ENCODE measurements at regions of chr14 and their contacts with region 1.

Region 1: GRCh38 chr14:105020815-105021655 is at the start of gene CDCA4:
- DNase-seq: peak; percentile 96 to 97
- ATAC-seq: peak; percentile 81 to 84
- H3K4me3 ChIP-seq: peak within 1 kb of the TSS; percentile 97
- H3K27ac ChIP-seq: peak within 1 kb of the TSS; percentile 97 to 98
- H3K4me1 ChIP-seq: peaks cover 75% of the 10 kb centered on the region
- CTCF ChIP-seq: no peak
- EP300 ChIP-seq: no peak
- POLR2A ChIP-seq: peak; percentile 71
- RAD21 ChIP-seq: no peak
- polyA plus RNA-seq, gene CDCA4: 19.5 and 24.2 TPM in 2 replicates

Region 2: GRCh38 chr14:104959858-104960257 is 61.2 kb before region 1 on chr14:
- CTCF ChIA-PET with region 1: no interaction called
- POLR2A ChIA-PET with region 1: no interaction called
- DNase-seq: no peak
- ATAC-seq: no peak
- H3K4me3 ChIP-seq: no peak overlapping the region
- H3K27ac ChIP-seq: no peak overlapping the region
- H3K4me1 ChIP-seq: peaks cover 7% of the 10 kb centered on the region; the same call in 2 of the 3 replicates
- CTCF ChIP-seq: no peak
- EP300 ChIP-seq: no peak
- POLR2A ChIP-seq: no peak
- RAD21 ChIP-seq: no peak

Region 3: DNA sequence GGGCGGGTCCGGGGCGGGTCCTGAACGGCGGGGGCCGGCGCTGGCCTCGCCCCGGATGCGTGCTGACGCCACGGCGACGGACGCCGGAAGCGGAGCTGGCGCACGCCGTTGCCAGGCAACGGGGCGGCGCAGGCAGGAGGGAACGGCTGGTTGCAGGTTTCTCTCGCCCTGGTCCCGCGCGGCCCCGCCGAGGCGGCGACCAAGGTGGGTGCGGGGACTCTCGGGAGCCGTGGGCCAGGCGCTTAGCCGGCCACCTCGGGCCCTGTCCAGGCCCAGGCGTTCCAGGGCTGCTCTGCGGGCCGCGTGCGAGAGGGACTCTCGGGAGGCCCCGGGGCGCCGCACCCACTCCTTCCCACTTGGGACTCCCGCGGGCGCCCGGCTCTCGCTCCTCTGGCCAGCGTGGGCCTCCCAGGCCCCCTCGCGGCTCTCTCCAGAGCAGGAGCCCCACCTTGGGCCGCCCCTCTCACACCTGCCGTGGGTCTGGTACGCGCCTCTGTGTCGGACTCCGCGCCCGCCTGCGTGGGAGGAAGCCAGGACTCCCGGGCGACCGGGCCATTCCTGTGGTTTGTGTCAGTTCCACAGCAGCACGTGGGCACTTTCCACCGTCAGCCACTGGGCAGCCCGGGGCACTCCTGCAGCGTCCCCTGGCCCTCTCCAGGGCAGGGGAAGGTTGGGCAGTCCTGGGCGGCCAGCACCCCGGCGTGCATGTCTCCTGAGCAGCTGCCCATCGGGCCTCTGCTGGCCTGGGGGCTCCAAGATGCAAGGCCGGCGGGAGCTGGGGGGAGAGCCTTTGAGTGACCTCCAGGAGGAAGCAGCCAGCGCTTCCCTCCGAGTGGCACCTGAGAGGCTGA is 35.1 kb before region 1 on chr14 and contains the start of gene CLBA1:
- CTCF ChIA-PET with region 1: interaction called, 4 read pairs
- POLR2A ChIA-PET with region 1: interaction called, 16 read pairs
- DNase-seq: peak; percentile 90 to 93
- ATAC-seq: peak; percentile 89 to 91
- H3K4me3 ChIP-seq: peak within 1 kb of the TSS; percentile 87
- H3K27ac ChIP-seq: peak within 1 kb of the TSS; percentile 89 to 96
- H3K4me1 ChIP-seq: peaks cover 16% of the 10 kb centered on the region; the same call in 2 of the 3 replicates
- CTCF ChIP-seq: no peak
- EP300 ChIP-seq: no peak
- POLR2A ChIP-seq: peak; percentile 55
- RAD21 ChIP-seq: no peak
- polyA plus RNA-seq, gene CLBA1: 11.3 and 11.5 TPM in 2 replicates

Region 4: GRCh38 chr14:105212541-105213300 is 191.7 kb after region 1 on chr14:
- CTCF ChIA-PET with region 1: no interaction called
- POLR2A ChIA-PET with region 1: no interaction called
- DNase-seq: no peak
- ATAC-seq: peak; percentile 7 to 10; a peak in 2 of 6 replicates
- H3K4me3 ChIP-seq: no peak overlapping the region
- H3K27ac ChIP-seq: no peak overlapping the region
- H3K4me1 ChIP-seq: no peaks in the 10 kb centered on the region
- CTCF ChIP-seq: no peak
- EP300 ChIP-seq: no peak
- POLR2A ChIP-seq: no peak
- RAD21 ChIP-seq: no peak